AG04449 (cell line): ENCODE measurements at regions of chr17 and their contacts with region 1.

Region 1: DNA sequence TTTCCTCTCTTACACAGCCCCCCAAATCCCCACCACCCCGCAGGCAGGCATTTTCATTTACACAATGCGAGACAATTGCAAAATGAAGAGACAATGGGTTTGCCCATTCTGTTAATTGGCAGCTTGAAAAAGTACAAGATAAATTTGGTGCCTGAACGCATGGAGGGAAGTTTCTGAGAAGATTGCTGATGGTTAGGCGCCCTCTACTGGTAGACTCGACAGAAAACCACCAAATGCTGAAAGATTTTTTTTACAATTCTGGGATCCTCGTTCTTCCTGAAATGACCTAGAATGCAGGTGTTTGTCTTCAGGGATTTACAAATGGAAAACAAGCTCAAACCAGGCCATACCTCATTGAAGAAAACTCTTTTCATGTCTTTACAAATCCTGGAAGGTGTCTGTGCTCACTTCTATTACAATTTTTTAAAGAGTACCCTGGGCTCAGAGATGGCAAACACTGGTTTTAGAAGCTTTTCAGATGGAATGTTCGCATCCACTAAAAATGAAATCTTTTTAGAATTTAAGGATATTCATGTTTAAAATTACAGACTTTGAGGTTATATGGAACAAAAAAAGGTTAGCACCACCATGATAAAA is 338.5 kb downstream of the PMP22 start:
- DNase-seq: no peak
- H3K4me3 ChIP-seq: no peak overlapping the region
- CTCF ChIP-seq: peak; percentile 62

Region 2: DNA sequence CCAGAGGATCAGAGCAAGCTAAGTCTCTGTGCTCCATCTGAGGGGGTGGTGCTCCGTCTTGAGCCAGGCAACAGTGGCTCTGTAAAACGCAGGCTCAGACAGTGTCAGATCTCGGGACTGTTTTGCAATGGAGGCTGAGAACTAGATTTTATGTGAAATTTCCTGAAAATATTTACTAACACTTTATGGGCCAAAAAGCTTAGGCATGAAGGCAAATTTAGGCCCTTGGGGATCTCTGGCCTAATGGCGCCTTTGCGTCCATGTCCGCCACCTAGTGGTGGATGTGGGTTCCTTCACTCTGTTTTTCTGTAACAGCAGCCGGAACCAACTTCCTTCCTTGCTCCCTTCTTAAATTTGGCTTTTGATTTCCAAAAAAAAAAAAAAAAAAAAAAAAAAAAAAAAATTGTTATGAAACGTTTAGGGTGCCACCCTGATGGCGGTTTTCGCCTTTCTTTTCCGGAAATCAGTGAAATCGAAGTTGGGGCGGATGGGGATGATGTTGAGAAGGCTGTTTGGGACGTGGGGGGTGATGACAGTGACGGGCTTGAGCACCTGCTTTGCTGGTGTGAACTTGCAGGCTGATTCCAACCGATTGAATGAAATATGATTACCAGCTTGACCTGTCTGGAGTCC is 1894.8 kb before region 1 on chr17:
- CTCF ChIA-PET with region 1: interaction called, 13 read pairs
- POLR2A ChIA-PET with region 1: no interaction called
- DNase-seq: no peak
- H3K4me3 ChIP-seq: no peak overlapping the region
- CTCF ChIP-seq: peak; percentile 72

Region 3: GRCh38 chr17:14316150-14316785 is 610.4 kb before region 1 on chr17:
- CTCF ChIA-PET with region 1: interaction called, 22 read pairs
- POLR2A ChIA-PET with region 1: no interaction called
- DNase-seq: no peak
- H3K4me3 ChIP-seq: no peak overlapping the region
- CTCF ChIP-seq: no peak

Region 4: GRCh38 chr17:14903854-14904253 is 22.8 kb before region 1 on chr17:
- CTCF ChIA-PET with region 1: interaction called, 13 read pairs
- POLR2A ChIA-PET with region 1: no interaction called
- DNase-seq: no peak
- H3K4me3 ChIP-seq: no peak overlapping the region
- CTCF ChIP-seq: no peak

Region 5: GRCh38 chr17:14942526-14943190 is 16.0 kb after region 1 on chr17:
- CTCF ChIA-PET with region 1: interaction called, 70 read pairs
- POLR2A ChIA-PET with region 1: no interaction called
- DNase-seq: no peak
- H3K4me3 ChIP-seq: no peak overlapping the region
- CTCF ChIP-seq: no peak

Region 6: GRCh38 chr17:14959106-14959648 is 32.6 kb after region 1 on chr17:
- CTCF ChIA-PET with region 1: no interaction called
- POLR2A ChIA-PET with region 1: no interaction called
- DNase-seq: no peak
- H3K4me3 ChIP-seq: no peak overlapping the region
- CTCF ChIP-seq: no peak

Region 7: DNA sequence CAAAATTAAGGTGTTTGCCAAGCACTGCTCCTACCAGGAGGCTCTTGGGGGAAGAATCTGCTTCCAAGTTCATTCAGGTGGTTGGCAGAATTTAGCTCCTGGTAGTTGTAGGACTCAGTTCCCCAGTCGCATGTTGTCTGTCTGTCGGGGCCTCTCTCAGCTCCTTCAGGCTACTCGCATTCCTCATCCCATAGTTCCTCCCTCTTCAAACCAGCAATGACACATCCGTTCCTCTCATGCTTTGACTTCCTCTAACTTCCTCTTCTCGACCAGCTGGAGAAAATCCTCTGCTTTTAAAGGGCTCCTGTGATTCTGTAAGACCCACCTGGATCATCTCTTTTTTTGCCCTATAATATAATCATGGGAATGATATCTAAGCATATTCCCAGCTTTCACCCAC is 230.4 kb after region 1 on chr17:
- CTCF ChIA-PET with region 1: interaction called, 42 read pairs
- POLR2A ChIA-PET with region 1: no interaction called
- DNase-seq: no peak
- H3K4me3 ChIP-seq: no peak overlapping the region
- CTCF ChIP-seq: no peak